ENCODE measurements at regions of chr2 and their contacts with region 1.

Region 1: DNA sequence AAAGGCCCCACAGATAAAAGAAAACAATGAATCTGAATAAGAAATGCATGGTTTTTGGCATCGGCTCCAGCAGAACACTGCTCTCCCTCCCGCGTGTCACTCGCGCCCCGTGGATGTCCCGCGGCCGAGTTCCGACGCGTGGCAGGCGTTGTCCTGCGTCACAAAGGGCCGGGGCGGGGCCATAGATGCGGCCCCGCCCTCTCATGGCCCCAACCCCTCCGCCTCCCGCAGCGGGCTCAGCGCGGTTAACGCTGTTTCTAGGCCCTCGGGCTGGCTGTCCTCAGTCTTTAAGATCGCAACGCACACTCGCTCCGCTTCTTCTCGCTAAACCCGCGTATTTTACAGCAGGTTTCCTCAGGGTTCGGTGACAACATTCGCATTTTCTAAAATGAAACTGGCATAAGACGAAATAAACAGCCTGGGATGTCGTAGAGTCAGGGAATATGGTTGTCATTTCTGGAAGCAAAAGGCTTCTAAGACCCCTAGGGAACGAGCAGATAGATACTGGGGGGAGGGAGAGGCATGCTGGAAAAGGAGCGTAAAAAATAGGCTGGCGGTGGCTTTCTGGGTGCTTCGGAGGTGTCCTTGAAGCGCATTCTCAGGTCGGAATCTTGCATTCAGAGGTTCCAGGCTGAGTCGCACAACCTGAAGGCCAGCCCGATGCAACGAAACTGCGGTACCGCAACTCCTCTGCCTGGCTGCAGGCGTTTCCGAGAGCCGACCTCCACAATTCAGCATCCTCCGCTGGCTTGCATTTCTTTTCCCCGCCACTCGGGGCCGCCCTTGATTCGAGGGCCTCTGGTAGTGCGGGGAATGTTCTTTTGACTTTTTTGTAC is at the start of gene FKBP7:
- DNase-seq: peak; percentile 83 to 95
- ATAC-seq: peak; percentile 80 to 92 (median 81)
- H3K4me3 ChIP-seq: peak within 1 kb of the TSS; percentile 67
- H3K4me3 Mint-ChIP-seq: peak within 1 kb of the TSS; percentile 98
- H3K27ac ChIP-seq: peak within 1 kb of the TSS; percentile 83
- H3K27ac Mint-ChIP-seq: peak within 1 kb of the TSS; percentile 97 to 99
- H3K4me1 ChIP-seq: peaks cover 32% of the 10 kb centered on the region
- H3K4me1 Mint-ChIP-seq: peaks cover 38 to 44% of the 10 kb centered on the region in 2 donors
- H3K27me3 ChIP-seq: no peaks in the 10 kb centered on the region
- H3K27me3 Mint-ChIP-seq: no peaks in the 10 kb centered on the region
- CTCF ChIP-seq: peak; percentile 60
- total RNA-seq, gene FKBP7: 1.1 to 1.3 (median 1.1) TPM

Region 2: GRCh38 chr2:178414266-178415247 is 64.1 kb before region 1 on chr2:
- intact Hi-C with region 1: loop called (anchors 2 kb)
- DNase-seq: peak; percentile 59 to 89
- ATAC-seq: peak; percentile 75 to 85 (median 76)
- H3K4me3 ChIP-seq: peak overlapping the region; percentile 59
- H3K4me3 Mint-ChIP-seq: peak overlapping the region; percentile 96
- H3K27ac ChIP-seq: peak overlapping the region; percentile 73
- H3K27ac Mint-ChIP-seq: peak overlapping the region; percentile 84 to 99
- H3K4me1 ChIP-seq: peaks cover 12% of the 10 kb centered on the region
- H3K4me1 Mint-ChIP-seq: peaks cover 22 to 27% of the 10 kb centered on the region in 2 donors
- H3K27me3 ChIP-seq: no peaks in the 10 kb centered on the region
- H3K27me3 Mint-ChIP-seq: no peaks in the 10 kb centered on the region
- CTCF ChIP-seq: peak; percentile 76

Region 3: DNA sequence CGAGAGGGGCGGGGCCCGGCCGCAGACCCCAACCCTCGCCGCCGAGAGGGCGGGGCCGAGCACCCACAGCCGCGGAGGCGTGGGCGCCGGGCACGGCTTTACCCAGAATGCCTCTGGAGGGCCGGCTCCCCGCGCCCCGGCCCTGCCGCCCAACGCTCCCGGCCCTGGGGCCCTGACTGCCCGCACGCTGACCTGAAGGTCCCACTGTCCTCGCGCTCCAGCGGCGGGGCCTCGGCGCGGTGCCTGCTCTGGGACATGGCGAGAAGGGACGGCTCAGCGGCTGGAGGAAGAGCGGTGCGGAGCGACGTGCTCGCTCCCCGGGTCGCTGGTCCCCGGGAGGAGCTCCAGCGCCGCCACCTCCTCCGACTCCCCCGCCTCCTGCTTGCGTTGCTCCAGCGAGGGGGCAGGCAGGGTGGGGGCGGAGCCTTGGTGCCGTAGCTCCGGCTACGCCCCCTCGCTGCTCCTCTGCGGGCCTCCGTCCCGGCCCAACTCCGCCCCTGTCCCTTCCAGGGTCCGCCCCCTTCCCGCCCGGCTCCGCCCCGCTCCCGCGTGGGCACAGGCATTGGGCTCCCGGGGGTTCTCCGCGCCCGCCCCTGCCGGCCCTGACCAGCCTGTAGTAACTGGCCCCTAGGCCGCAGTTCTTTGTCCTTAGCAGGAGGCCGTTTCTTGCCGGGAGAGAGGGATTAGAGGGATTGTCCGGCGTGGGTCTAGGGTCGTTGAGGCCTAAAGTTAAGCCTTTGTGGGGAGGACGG is 27.7 kb before region 1 on chr2 and contains the starts of genes PJVK and PRKRA:
- intact Hi-C with region 1: loop called (anchors 1 kb)
- DNase-seq: peak; percentile 94 to 98
- ATAC-seq: peak; percentile 94 to 99 (median 95)
- H3K4me3 ChIP-seq: peak within 1 kb of the TSS; percentile 94
- H3K4me3 Mint-ChIP-seq: peak within 1 kb of the TSS; percentile 88
- H3K27ac ChIP-seq: peak within 1 kb of the TSS; percentile 83
- H3K27ac Mint-ChIP-seq: peak within 1 kb of the TSS; percentile 17 to 92
- H3K4me1 ChIP-seq: peaks cover 13% of the 10 kb centered on the region
- H3K4me1 Mint-ChIP-seq: peaks cover 34 to 37% of the 10 kb centered on the region in 2 donors
- H3K27me3 ChIP-seq: no peaks in the 10 kb centered on the region
- H3K27me3 Mint-ChIP-seq: peaks cover 5 to 13% of the 10 kb centered on the region in 2 donors
- CTCF ChIP-seq: no peak
- total RNA-seq, gene PJVK: 1.3 to 2.7 (median 2.5) TPM
- total RNA-seq, gene PRKRA: 42.1 to 48.3 (median 44.0) TPM

Region 4: DNA sequence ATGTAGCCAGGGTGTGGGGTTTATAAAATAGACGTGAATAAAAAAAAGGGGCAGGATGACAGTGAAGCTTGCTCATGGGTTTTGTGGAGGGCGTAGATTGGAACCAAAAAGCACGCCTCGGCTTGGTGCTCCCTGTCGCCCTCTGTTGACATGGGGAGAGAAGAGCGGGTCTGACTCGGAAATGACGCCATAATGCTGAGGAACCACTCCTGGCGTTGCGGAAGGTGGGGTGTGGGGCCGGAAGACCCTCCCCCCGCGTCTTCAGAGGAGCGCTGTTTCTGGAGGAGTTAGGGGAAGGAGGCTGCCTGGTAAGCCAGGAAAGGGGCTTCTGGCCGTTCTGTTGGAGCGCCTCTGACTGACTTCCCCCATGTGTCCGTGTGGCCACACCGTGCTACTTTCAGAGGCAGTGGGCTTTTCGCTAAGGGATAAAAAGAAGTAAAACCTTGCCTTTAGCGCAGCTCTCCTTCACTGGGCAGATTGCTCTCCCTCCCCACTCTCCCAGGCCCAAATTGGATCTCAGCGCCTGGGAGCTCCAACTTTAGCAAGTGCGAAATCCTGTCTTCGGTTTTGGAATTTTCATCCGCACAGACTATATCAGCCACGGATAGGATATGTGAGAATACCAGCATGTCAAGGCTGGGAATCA is 44.4 kb after region 1 on chr2:
- intact Hi-C with region 1: loop called (anchors 1 kb)
- DNase-seq: peak; percentile 72 to 93
- ATAC-seq: peak; percentile 99 to 100 (median 100)
- H3K4me3 ChIP-seq: peak overlapping the region; percentile 54
- H3K4me3 Mint-ChIP-seq: peak overlapping the region; percentile 92
- H3K27ac ChIP-seq: peak overlapping the region; percentile 28
- H3K27ac Mint-ChIP-seq: peak overlapping the region; percentile 84 to 89
- H3K4me1 ChIP-seq: peaks cover 12% of the 10 kb centered on the region
- H3K4me1 Mint-ChIP-seq: peaks cover 29 to 30% of the 10 kb centered on the region in 2 donors
- H3K27me3 ChIP-seq: no peaks in the 10 kb centered on the region
- H3K27me3 Mint-ChIP-seq: no peaks in the 10 kb centered on the region
- CTCF ChIP-seq: peak; percentile 71

Region 5: GRCh38 chr2:180006781-180007579 is 1528.3 kb after region 1 on chr2 and contains the start of gene CWC22:
- intact Hi-C with region 1: loop called (anchors 5 kb)
- DNase-seq: peak; percentile 77 to 96
- ATAC-seq: peak; percentile 93 to 96 (median 93)
- H3K4me3 ChIP-seq: peak within 1 kb of the TSS; percentile 93
- H3K4me3 Mint-ChIP-seq: peak within 1 kb of the TSS; percentile 99
- H3K27ac ChIP-seq: peak within 1 kb of the TSS; percentile 91
- H3K27ac Mint-ChIP-seq: peak within 1 kb of the TSS; percentile 100
- H3K4me1 ChIP-seq: peaks cover 7% of the 10 kb centered on the region
- H3K4me1 Mint-ChIP-seq: peaks cover 41 to 45% of the 10 kb centered on the region in 2 donors
- H3K27me3 ChIP-seq: no peaks in the 10 kb centered on the region
- H3K27me3 Mint-ChIP-seq: no peaks in the 10 kb centered on the region
- CTCF ChIP-seq: no peak
- total RNA-seq, gene CWC22: 14.9 to 20.3 (median 16.1) TPM